ENCODE measurements at regions of chr12 and their contacts with region 1.

Region 1: DNA sequence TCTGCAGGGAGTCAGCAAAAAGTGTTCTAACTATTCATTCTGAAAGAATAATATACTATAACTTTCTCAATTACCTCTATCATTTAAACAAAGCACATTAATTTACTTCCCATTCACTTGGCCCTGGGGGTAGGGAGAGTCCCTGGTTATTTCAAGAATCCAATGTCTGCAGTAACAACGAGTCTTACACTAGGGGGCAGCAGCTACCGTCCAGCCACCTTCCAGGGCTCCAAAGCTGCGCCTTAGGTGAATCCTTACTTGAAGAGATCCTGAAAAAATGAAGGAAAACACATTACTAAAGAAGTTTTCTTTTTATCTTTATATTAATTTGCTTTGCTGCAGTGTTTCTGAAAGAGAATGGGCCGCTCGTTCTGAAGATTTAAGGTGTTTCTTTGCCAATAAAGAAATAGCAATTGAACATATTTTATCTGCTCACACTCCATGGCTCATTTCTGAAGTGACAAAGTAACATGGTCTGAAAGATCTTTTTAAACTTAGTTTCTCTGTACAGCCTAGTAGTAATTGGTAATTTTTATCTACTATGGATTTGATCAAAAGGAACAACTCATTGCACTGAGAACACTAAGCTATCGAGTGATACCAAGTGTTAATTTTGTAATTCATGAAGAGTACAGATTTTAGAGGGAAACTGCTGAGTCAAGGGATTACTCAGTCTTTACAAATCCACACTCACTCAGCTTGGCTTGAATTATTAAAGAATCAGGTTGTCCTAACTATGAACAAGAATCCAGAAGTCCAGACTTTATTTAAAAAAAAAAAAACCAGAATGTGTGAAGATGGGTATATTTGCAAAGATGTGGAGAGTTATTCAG is 27.6 kb downstream of the BHLHE41 start:
- DNase-seq: no peak
- H3K4me3 ChIP-seq: no peak overlapping the region
- H3K27ac ChIP-seq: no peak overlapping the region
- H3K4me1 ChIP-seq: peaks cover 0 to 7% (median 2%) of the 10 kb centered on the region in 4 donors
- H3K27me3 ChIP-seq: no peaks in the 10 kb centered on the region
- CTCF ChIP-seq: peak; percentile 91 to 93 (median 91)
- EP300 ChIP-seq: no peak
- POLR2A ChIP-seq: no peak

Region 2: GRCh38 chr12:26651566-26652188 is 554.4 kb after region 1 on chr12:
- intact Hi-C with region 1: loop called (anchors 5 kb)
- DNase-seq: no peak
- H3K4me3 ChIP-seq: no peak overlapping the region
- H3K27ac ChIP-seq: peak overlapping the region in 3 of 4 donors; percentile 5 to 52 (median 28)
- H3K4me1 ChIP-seq: peaks cover 0 to 33% (median 20%) of the 10 kb centered on the region in 4 donors
- H3K27me3 ChIP-seq: no peaks in the 10 kb centered on the region
- CTCF ChIP-seq: peak; percentile 79 to 84 (median 82)
- EP300 ChIP-seq: no peak
- POLR2A ChIP-seq: no peak

Region 3: DNA sequence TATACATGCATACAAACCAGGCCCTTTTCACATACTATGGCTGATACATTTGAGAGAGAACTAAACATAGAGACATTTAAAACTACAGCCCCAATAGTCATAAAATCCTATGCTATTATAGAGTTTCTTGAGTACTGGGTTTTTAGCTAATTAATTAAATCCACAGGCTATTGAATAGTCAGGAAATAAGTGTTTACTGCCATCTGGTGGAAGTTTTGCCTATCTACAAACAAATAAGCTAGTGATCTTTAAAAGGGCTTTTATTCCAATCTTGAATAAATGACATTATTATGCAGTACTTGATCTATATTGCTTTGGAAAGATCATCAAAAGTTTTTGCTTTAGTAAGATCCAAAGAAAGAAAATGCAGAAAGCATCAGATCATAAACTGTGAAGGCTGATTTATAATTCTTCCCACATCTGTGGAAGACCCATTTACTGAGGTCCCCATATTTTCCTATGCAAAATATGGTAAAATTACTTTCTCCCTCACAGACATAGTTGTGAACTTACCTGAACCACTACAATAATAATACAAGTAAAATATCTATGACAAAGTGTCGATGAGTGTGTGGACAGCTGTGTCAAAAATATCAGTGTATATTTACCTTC is 604.4 kb after region 1 on chr12:
- intact Hi-C with region 1: loop called (anchors 10 kb)
- DNase-seq: no peak
- H3K4me3 ChIP-seq: no peak overlapping the region
- H3K27ac ChIP-seq: no peak overlapping the region
- H3K4me1 ChIP-seq: peaks cover 0 to 19% (median 15%) of the 10 kb centered on the region in 4 donors
- H3K27me3 ChIP-seq: no peaks in the 10 kb centered on the region
- CTCF ChIP-seq: peak; percentile 49 to 67 (median 54)
- EP300 ChIP-seq: no peak
- POLR2A ChIP-seq: no peak